ENCODE measurements at regions of chrX and their contacts with region 1.

Region 1: GRCh38 chrX:78653118-78653822 is 5.9 kb downstream of the RTL3 start:
- DNase-seq: no peak
- H3K4me3 Mint-ChIP-seq: peak overlapping the region; percentile 55
- H3K27ac Mint-ChIP-seq: peak overlapping the region; percentile 49
- H3K4me1 Mint-ChIP-seq: peaks cover 38% of the 10 kb centered on the region
- H3K27me3 Mint-ChIP-seq: no peaks in the 10 kb centered on the region

Region 2: GRCh38 chrX:78139160-78140123 is 513.8 kb before region 1 on chrX and contains the start of gene TAF9B:
- intact Hi-C with region 1: loop called (anchors 10 kb)
- DNase-seq: peak; percentile 78
- H3K4me3 Mint-ChIP-seq: peak within 1 kb of the TSS; percentile 92
- H3K27ac Mint-ChIP-seq: peak within 1 kb of the TSS; percentile 86
- H3K4me1 Mint-ChIP-seq: no peaks in the 10 kb centered on the region
- H3K27me3 Mint-ChIP-seq: no peaks in the 10 kb centered on the region
- total RNA-seq, gene TAF9B: 14.9 and 15.0 TPM in 2 replicates

Region 3: GRCh38 chrX:78327370-78328086 is 325.7 kb before region 1 on chrX and contains the start of gene CYSLTR1:
- intact Hi-C with region 1: loop called (anchors 5 kb)
- DNase-seq: no peak
- H3K4me3 Mint-ChIP-seq: peak within 1 kb of the TSS; percentile 90
- H3K27ac Mint-ChIP-seq: peak within 1 kb of the TSS; percentile 82
- H3K4me1 Mint-ChIP-seq: peaks cover 66% of the 10 kb centered on the region
- H3K27me3 Mint-ChIP-seq: no peaks in the 10 kb centered on the region
- total RNA-seq, gene CYSLTR1: 13.9 and 14.2 TPM in 2 replicates

Region 4: GRCh38 chrX:78375894-78376293 is 277.4 kb before region 1 on chrX:
- intact Hi-C with region 1: loop called (anchors 5 kb)
- DNase-seq: no peak
- H3K4me3 Mint-ChIP-seq: no peak overlapping the region
- H3K27ac Mint-ChIP-seq: peak overlapping the region; percentile 27
- H3K4me1 Mint-ChIP-seq: peaks cover 46% of the 10 kb centered on the region
- H3K27me3 Mint-ChIP-seq: no peaks in the 10 kb centered on the region

Region 5: DNA sequence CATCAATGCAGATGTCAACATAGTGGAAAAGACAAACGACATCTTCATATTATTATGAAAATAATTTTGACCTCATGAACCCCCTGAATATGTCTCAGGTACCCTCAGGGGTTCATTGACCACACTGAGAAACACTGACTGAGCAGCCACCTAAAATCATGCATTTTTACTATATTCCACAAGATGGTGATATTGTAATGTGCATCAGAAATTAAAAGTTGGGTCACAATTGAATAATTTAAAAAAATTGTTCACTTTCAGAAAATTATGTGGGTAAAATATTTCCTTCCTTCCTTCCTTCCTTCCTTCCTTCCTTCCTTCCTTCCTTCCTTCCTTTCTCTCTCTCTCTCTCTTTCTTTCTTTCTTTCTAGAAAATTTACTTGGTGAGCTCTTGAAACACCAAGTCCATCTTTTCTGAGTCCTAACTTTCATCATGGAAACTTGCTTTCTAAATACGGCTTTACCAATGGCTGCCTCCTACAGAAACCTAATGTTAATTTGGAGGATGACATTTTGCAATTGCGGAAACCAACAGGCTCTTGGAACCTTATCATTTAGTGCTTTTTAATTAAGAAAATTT is 97.8 kb before region 1 on chrX:
- intact Hi-C with region 1: loop called (anchors 10 kb)
- DNase-seq: no peak
- H3K4me3 Mint-ChIP-seq: no peak overlapping the region
- H3K27ac Mint-ChIP-seq: peak overlapping the region; percentile 61
- H3K4me1 Mint-ChIP-seq: peaks cover 5% of the 10 kb centered on the region
- H3K27me3 Mint-ChIP-seq: no peaks in the 10 kb centered on the region

Region 6: GRCh38 chrX:78979789-78980464 is 326.7 kb after region 1 on chrX:
- intact Hi-C with region 1: loop called (anchors 1 kb)
- DNase-seq: no peak
- H3K4me3 Mint-ChIP-seq: peak overlapping the region; percentile 67
- H3K27ac Mint-ChIP-seq: peak overlapping the region; percentile 100
- H3K4me1 Mint-ChIP-seq: peaks cover 35% of the 10 kb centered on the region
- H3K27me3 Mint-ChIP-seq: no peaks in the 10 kb centered on the region

Region 7: DNA sequence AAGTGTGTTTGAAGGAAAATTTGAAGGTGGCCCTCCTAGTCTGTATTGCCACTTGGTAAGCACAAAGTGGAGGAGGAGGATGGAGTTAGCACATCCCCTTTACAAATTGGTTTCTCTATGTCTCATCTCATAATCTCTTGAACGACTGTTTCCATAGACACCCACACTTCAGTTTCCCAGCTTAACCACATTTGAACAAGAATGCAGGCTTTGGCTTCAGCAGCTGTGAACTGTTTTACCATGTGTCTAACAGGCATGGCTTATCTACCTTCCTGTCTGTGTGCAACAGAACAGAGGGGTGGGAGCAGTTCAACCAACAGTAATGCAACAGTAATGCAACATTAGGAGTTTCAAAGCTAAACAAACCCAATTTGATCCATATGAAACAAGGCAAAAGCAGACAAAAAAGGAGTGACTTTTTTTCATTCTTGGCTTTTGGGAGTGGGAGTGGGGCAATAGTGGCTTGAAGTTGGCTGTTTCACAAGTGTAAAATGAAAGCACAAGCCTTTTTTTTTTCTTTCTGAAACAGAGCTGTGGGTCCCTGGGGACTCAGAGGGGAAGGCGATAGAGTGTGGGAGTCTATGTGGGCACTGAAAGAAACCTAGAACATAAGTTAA is 605.9 kb after region 1 on chrX:
- intact Hi-C with region 1: loop called (anchors 2 kb)
- DNase-seq: peak; percentile 57
- H3K4me3 Mint-ChIP-seq: peak overlapping the region; percentile 45
- H3K27ac Mint-ChIP-seq: peak overlapping the region; percentile 87
- H3K4me1 Mint-ChIP-seq: peaks cover 86% of the 10 kb centered on the region
- H3K27me3 Mint-ChIP-seq: no peaks in the 10 kb centered on the region